ENCODE measurements at regions of chr18 and their contacts with region 1.

Region 1: GRCh38 chr18:76398896-76399612 is 96.0 kb downstream of the ZNF516 start:
- DNase-seq: peak; percentile 80 to 84
- ATAC-seq: peak; percentile 84 to 96 (median 92)
- H3K4me3 ChIP-seq: no peak overlapping the region
- H3K27ac ChIP-seq: no peak overlapping the region
- H3K4me1 ChIP-seq: peaks cover 0 to 32% (median 11%) of the 10 kb centered on the region in 9 donors
- H3K27me3 ChIP-seq: no peaks in the 10 kb centered on the region
- CTCF ChIP-seq: peak; percentile 90 to 97 (median 94)

Region 2: DNA sequence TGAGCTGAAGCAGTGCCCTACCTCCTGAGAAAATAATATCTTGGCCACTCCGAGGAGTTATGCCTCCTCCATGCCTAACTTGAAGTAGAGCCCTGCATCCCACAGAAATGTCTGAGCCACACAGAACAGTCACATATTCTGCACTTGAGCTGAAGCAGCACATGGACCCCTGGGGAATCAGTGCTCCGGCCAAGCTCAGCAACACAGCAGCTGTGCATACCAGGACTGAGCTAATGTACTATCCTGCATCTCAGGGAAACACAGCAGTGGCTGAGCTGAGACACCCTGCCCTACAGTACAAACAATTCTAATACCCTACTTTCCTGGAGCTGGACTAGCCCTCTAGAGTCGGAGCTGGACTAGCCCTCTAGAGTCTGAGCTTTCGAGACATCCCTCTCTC is 70.9 kb before region 1 on chr18:
- intact Hi-C with region 1: no loop called
- DNase-seq: no peak
- ATAC-seq: peak in 4 of 8 donors; percentile 45 to 70 (median 57)
- H3K4me3 ChIP-seq: no peak overlapping the region
- H3K27ac ChIP-seq: no peak overlapping the region
- H3K4me1 ChIP-seq: no peaks in the 10 kb centered on the region
- H3K27me3 ChIP-seq: no peaks in the 10 kb centered on the region
- CTCF ChIP-seq: no peak

Region 3: DNA sequence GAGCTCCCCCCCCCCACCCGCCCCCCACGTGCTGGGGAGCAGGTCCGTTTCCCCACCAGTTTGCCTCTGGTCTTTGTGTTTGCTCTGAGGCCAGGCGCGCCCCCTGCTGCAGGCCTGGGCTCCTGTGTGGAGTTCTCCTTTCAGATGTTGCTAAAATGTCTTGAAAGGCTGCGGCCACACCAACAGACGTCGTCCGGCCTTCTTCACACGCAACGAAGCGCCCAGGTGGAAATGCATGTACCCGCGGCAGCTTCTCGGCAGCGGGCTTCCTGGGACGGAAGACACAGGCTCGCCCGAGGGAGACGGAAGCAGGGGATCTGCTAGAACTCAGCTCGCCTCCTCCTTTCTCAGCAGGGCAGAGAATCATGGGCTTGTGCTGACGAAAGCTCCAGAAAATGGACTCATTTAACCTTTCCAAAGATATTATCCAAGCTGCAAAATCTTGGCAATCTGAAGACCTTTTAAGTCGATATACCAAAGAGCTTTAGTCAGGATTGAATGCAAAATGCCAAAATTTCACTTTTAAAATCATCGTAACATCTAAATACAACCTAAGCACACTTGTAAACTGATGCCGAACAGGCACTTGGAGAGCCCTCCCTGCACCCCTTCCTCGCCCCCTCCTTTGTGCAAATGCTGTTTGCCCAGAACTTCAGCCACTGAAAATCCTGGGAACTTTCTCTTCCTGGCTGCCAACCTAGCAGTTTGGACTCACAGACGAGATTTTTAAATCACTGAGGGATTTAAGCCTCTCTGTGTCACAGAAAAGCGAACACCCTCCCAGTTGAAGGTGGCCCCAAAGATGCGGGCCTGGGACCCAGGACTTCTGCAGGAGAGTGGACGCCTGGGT is 221.5 kb after region 1 on chr18:
- intact Hi-C with region 1: loop called (anchors 2 to 10 kb)
- DNase-seq: peak; percentile 69
- ATAC-seq: peak; percentile 81 to 91 (median 87)
- H3K4me3 ChIP-seq: peak overlapping the region; percentile 1 to 58 (median 50)
- H3K27ac ChIP-seq: peak overlapping the region in 8 of 10 donors; percentile 2 to 83 (median 64)
- H3K4me1 ChIP-seq: peaks cover 0 to 34% (median 16%) of the 10 kb centered on the region in 9 donors
- H3K27me3 ChIP-seq: peaks cover 0 to 10% (median 0%) of the 10 kb centered on the region in 7 donors
- CTCF ChIP-seq: peak; percentile 25 to 76 (median 68)

Region 4: GRCh38 chr18:76686737-76687262 is 287.7 kb after region 1 on chr18:
- intact Hi-C with region 1: loop called (anchors 1 to 5 kb)
- DNase-seq: peak; percentile 36 to 49
- ATAC-seq: peak; percentile 85 to 93 (median 88)
- H3K4me3 ChIP-seq: no peak overlapping the region
- H3K27ac ChIP-seq: peak overlapping the region in 1 of 10 donors; percentile 28
- H3K4me1 ChIP-seq: peaks cover 3 to 12% (median 9%) of the 10 kb centered on the region in 9 donors
- H3K27me3 ChIP-seq: peaks cover 0 to 58% (median 30%) of the 10 kb centered on the region in 7 donors
- CTCF ChIP-seq: peak; percentile 29 to 78 (median 65)

Region 5: DNA sequence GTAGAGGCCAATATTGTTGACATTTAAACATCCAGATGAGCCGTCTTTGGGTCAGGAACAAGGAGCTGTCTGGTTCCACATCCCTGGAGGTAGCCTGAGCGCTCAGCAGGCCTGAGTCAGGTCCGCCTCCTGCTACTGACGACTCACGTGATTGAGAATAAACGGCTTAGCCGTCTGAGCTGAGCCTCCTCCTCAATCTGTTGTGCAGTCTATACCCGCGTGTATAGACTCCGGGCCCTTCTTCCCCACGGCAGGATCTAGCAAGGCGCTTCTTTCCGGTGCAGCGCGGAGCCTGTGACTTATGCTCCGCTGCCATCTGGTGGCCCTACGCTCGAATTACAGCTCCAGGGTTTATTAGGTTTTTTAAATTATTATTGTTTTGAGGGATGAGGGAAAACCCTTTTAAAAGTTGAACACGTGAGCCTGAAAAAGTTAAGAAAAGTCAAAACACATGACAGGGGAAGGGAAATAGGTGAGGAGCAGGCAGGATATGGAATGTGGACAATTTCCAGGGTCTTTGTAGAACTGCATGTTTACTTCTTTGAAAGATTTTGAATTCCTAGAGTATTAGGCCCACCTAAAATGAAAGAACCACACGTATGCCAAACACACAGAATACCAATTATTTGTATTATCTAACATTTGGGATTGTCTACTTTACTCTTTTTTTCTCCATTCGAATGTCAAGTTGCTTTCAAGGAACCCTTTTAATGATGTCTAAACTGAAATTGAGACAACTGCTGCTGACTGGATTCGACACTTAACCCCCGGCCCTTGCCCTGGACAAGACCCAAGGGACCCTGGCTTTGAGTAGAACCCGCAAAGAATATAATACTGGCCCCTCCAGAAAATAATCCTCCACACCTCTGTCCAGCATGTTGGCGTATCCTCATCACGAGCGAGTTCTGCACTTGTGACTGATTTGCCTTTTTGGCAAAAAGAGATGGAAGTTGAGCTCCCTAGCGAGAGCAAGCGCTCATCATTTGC is 310.9 kb after region 1 on chr18:
- intact Hi-C with region 1: loop called (anchors 1 to 5 kb)
- DNase-seq: peak; percentile 46 to 56
- ATAC-seq: peak; percentile 73 to 85 (median 81)
- H3K4me3 ChIP-seq: peak overlapping the region in 1 of 10 donors; percentile 23
- H3K27ac ChIP-seq: no peak overlapping the region
- H3K4me1 ChIP-seq: peaks cover 0 to 7% (median 0%) of the 10 kb centered on the region in 9 donors
- H3K27me3 ChIP-seq: no peaks in the 10 kb centered on the region
- CTCF ChIP-seq: peak; percentile 89 to 95 (median 91)